ENCODE measurements at regions of chr12 and their contacts with region 1.

Region 1: GRCh38 chr12:69639400-69640016 is 28.8 kb upstream of the LRRC10 start:
- DNase-seq: peak; percentile 30 to 71 (median 59)
- H3K4me3 ChIP-seq: no peak overlapping the region
- H3K27ac ChIP-seq: no peak overlapping the region
- H3K4me1 ChIP-seq: no peaks in the 10 kb centered on the region
- H3K27me3 ChIP-seq: no peaks in the 10 kb centered on the region
- CTCF ChIP-seq: peak; percentile 31 to 52 (median 34)
- EP300 ChIP-seq: no peak
- POLR2A ChIP-seq: no peak

Region 2: GRCh38 chr12:69388371-69388770 is 251.1 kb before region 1 on chr12:
- intact Hi-C with region 1: loop called in 1 of 4 experiments (anchors 10 kb)
- DNase-seq: no peak
- H3K4me3 ChIP-seq: no peak overlapping the region
- H3K27ac ChIP-seq: no peak overlapping the region
- H3K4me1 ChIP-seq: no peaks in the 10 kb centered on the region
- H3K27me3 ChIP-seq: no peaks in the 10 kb centered on the region
- CTCF ChIP-seq: peak in 1 of 3 donors; percentile 31
- EP300 ChIP-seq: no peak
- POLR2A ChIP-seq: no peak